Right ventricle myocardium superior (tissue), 1 donor: ENCODE measurements at regions of chr1 and their contacts with region 1.

Region 1: DNA sequence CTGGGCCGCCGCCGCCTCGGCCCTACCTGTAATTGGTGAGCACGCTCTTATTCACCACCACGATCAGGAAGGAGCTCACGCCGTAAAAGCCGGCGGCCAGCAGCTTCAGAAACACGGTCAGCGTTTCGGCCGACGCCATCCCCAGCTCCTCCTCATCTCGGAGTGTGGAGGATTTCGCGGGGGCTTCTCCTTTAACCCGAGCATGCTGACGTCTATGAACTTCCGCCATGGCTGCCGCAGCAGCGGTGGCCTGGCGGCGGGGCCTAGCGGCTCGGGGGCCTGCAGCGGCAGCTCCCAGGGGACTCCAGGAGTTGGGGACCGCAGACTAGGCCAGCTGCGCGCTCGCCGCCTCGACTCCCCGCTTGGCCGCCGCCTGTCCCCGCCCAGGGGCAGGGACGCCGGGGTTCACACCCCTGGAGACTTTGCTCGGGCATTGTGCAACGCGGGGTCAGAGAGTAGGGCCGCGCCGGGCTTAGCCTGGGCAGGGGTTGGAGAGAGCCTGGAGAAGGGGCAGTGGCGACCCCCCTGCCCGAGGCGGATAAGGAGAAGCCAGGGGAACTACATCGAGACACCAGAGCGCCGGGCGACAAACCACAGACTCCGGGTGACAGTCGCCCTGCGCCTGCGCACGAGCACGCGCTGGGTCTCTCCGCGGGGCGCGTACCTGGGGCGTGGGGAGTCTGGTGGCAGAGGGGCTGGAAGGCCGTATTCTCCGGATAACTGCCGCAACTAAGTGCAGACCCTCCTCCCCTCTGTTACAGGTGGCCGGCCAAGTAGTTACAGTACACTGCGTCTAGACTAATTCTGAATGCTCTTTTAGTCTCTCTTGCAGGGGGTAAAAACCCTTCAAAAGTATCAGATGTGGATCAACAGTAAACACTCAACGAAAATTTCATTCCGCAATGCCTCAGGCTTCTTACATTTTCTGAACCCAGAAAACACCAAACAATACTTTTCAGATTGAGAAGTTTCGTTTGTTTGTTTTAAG is at the start of gene SLC35D1:
- DNase-seq: peak; percentile 86
- ATAC-seq: peak; percentile 86
- total RNA-seq, gene SLC35D1: 3.1 TPM

Region 2: DNA sequence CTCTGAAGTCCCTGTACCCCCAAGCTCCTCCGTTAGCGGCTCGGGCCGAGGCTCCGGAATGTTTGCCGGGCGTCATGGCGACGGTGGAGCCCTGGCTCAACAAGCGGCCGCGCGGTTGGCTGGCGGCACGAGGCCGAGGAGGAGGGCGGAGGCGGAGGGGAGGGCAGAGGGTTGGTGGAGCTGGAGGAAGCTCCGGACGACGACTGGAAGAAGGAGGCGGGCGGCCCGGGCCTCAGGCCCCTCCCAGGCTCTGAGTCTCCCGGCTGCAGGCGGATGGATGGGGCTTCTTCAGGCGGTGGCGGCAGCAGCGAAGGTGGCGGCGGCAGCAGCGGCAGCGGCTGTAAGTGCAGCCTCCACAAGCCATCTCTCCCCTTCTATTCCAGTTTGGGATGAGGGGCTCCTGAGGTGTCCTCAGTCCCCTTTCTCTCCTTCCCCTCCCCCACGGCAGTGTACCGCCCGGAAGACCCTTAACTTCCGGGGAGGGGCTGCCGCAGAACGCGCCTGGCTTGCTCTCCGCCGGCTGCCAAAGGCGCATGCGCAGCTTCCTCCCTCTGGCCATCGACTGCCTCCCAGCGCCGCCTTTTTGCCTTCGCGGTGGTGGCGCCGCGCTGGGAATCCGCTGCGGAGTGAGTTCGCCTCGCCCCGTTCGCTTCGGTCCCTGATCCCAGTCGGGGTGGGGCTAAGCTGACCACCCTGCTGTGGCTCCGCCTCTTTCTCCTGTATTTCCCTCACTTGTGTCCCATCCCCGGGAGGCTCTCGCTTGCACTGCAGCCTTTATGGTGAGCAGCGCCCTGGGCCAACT is 129.1 kb before region 1 on chr1 and contains the starts of genes DNAI4 and MIER1:
- intact Hi-C with region 1: loop called (anchors 10 kb)
- DNase-seq: peak; percentile 99
- ATAC-seq: peak; percentile 98
- total RNA-seq, gene DNAI4: 13.5 TPM
- total RNA-seq, gene MIER1: 15.2 TPM